CD8-positive, alpha-beta T cell (primary cell): ENCODE measurements at regions of chr19 and their contacts with region 1.

Region 1: DNA sequence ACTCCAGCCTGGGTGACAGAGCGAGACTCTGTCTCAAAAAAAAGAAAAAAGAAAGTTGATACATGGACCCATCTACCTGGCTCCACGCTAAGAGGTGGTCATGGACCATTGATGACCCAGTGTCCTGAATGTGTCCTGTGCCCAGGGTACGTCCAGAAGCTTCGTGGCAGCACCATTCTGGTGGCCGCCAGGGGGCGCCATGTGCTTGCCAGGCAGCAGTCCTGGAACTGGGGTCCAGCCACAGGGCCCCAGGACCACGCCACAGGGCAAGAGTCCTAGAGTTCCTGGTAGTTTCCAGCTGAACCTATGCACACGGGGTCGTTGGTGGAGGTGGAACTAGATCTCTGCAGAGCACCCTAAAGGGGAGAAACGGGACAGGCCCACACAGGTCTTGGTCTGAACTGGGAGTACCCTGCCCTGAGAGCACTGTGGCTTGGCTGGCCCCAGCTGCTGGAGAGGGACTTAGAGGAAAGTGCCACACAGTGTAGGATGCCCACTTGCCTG is 19.9 kb upstream of the FBXO27 start:
- DNase-seq: peak; percentile 44 to 86 (median 71)
- ATAC-seq: no peak
- H3K4me3 ChIP-seq: no peak overlapping the region
- H3K4me3 Mint-ChIP-seq: no peak overlapping the region
- H3K27ac ChIP-seq: no peak overlapping the region
- H3K27ac Mint-ChIP-seq: no peak overlapping the region
- H3K4me1 ChIP-seq: no peaks in the 10 kb centered on the region
- H3K4me1 Mint-ChIP-seq: no peaks in the 10 kb centered on the region
- H3K27me3 ChIP-seq: no peaks in the 10 kb centered on the region
- H3K27me3 Mint-ChIP-seq: peaks cover 4% of the 10 kb centered on the region
- CTCF ChIP-seq: peak; percentile 94

Region 2: GRCh38 chr19:38929929-38930775 is 122.1 kb before region 1 on chr19 and contains the start of gene SARS2:
- CTCF ChIA-PET with region 1: no interaction called
- POLR2A ChIA-PET with region 1: no interaction called
- intact Hi-C with region 1: no loop called
- DNase-seq: peak; percentile 83 to 98 (median 92)
- ATAC-seq: peak; percentile 74
- H3K4me3 ChIP-seq: peak within 1 kb of the TSS; percentile 81 to 85
- H3K4me3 Mint-ChIP-seq: peak within 1 kb of the TSS; percentile 97
- H3K27ac ChIP-seq: peak within 1 kb of the TSS; percentile 85 to 87
- H3K27ac Mint-ChIP-seq: peak within 1 kb of the TSS; percentile 100
- H3K4me1 ChIP-seq: peaks cover 22% of the 10 kb centered on the region
- H3K4me1 Mint-ChIP-seq: peaks cover 39% of the 10 kb centered on the region
- H3K27me3 ChIP-seq: no peaks in the 10 kb centered on the region
- H3K27me3 Mint-ChIP-seq: no peaks in the 10 kb centered on the region
- CTCF ChIP-seq: peak; percentile 100
- total RNA-seq, gene SARS2: 24.3 to 26.1 TPM

Region 3: DNA sequence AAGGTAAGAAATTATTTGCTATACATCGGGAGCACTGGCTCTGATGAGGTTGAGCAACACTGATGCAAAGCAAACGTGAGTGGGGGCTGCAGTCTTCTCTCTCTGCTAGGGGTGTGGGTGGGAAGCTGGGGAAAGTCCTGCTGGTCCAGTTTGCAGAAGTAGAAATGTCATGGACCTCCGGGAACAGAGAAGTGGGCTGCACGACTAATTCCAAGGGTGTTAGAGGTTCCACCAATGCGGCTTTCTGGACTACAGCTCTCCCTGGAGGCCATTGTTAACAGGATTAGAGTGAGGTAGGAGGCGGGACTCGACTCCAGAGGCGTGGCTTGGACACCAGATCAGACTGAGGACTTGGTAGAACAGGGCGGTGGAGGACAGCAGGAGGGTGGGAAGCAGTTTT is 14.2 kb before region 1 on chr19:
- CTCF ChIA-PET with region 1: interaction called, 11 read pairs
- POLR2A ChIA-PET with region 1: no interaction called
- intact Hi-C with region 1: no loop called
- DNase-seq: peak in 1 of 9 experiments; percentile 14
- ATAC-seq: no peak
- H3K4me3 ChIP-seq: no peak overlapping the region
- H3K4me3 Mint-ChIP-seq: no peak overlapping the region
- H3K27ac ChIP-seq: no peak overlapping the region
- H3K27ac Mint-ChIP-seq: no peak overlapping the region
- H3K4me1 ChIP-seq: no peaks in the 10 kb centered on the region
- H3K4me1 Mint-ChIP-seq: no peaks in the 10 kb centered on the region
- H3K27me3 ChIP-seq: no peaks in the 10 kb centered on the region
- H3K27me3 Mint-ChIP-seq: peaks cover 3% of the 10 kb centered on the region
- CTCF ChIP-seq: no peak

Region 4: DNA sequence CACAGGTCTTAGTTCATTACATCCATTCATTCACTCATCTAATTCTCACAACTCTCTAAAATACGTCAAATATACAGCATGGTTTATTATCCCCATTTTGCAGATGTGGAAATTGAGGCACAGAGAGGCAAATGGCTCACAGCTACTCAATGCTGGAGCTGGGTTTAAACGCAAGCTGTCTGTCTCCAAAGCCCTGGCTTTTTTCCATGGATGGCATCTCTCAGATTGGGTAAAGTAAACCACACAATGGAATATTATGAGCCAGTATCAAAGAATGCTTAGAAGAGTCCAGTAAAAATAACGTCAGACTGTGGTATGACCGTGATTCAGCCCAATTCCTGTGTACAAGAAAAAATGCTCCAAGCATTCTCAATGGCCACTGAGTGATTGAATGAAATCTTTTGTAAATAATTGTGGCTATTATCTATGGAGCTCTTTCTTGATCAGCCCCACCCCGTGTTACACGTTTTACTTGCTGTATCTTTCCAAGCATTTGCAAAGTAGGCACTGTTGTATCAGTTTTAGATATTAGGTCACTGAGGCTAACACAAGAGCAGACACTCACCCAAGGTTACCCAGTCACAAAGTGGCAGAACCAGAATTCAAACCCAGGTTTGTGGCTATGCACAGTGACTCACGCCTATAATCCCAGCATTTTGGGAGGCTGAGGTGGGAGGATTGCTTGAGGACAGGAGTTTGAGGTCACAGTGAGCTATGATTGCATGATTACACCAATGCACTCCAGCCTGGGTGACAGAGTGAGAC is 26.3 kb after region 1 on chr19:
- CTCF ChIA-PET with region 1: interaction called, 9 read pairs
- POLR2A ChIA-PET with region 1: interaction called, 5 read pairs
- intact Hi-C with region 1: loop called in 1 of 2 experiments (anchors 2 kb)
- DNase-seq: no peak
- ATAC-seq: no peak
- H3K4me3 ChIP-seq: no peak overlapping the region
- H3K4me3 Mint-ChIP-seq: no peak overlapping the region
- H3K27ac ChIP-seq: no peak overlapping the region
- H3K27ac Mint-ChIP-seq: no peak overlapping the region
- H3K4me1 ChIP-seq: peaks cover 17% of the 10 kb centered on the region
- H3K4me1 Mint-ChIP-seq: peaks cover 21% of the 10 kb centered on the region
- H3K27me3 ChIP-seq: peaks cover 6% of the 10 kb centered on the region in 2 experiments
- H3K27me3 Mint-ChIP-seq: peaks cover 32% of the 10 kb centered on the region
- CTCF ChIP-seq: no peak

Region 5: GRCh38 chr19:39099341-39099740 is 47.0 kb after region 1 on chr19:
- CTCF ChIA-PET with region 1: no interaction called
- POLR2A ChIA-PET with region 1: no interaction called
- intact Hi-C with region 1: no loop called
- DNase-seq: no peak
- ATAC-seq: no peak
- H3K4me3 ChIP-seq: no peak overlapping the region
- H3K4me3 Mint-ChIP-seq: no peak overlapping the region
- H3K27ac ChIP-seq: no peak overlapping the region
- H3K27ac Mint-ChIP-seq: no peak overlapping the region
- H3K4me1 ChIP-seq: no peaks in the 10 kb centered on the region
- H3K4me1 Mint-ChIP-seq: peaks cover 2% of the 10 kb centered on the region
- H3K27me3 ChIP-seq: peaks cover 0 to 4% of the 10 kb centered on the region in 2 experiments
- H3K27me3 Mint-ChIP-seq: peaks cover 33% of the 10 kb centered on the region
- CTCF ChIP-seq: no peak

Region 6: DNA sequence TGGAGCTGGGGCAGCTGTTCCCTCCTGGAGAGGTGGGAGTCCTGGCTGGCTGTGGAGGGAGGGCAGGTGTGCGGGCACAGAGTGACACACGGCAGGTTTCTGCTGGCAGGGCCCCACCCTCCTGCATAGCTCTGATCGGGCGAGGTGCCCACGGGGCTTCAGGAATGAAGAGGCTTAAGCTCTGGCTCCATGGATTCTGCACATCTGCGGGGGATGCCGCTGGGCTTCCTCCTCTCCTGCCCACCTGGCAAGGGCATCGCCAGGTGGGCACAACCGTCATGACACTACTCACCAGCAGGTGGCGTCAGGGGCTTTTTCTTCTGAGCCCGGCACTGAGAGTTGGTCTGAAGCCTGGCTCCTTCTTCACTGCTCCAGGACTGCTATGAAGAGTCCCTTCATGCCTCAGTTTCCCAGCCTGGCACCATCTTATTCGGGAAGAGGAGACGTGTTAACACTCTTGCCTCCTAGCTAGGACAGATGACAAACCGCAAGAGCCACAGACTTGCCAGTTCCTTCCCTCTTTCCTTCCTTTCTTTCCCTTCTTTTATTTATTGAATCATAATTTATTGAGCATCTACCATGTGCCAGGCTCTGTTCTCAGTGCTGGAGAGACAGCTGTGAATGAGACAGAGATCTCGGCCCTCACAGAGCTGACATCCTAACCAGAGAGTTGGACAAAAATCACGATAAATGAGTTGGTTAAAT is 58.1 kb after region 1 on chr19:
- CTCF ChIA-PET with region 1: interaction called, 9 read pairs
- POLR2A ChIA-PET with region 1: no interaction called
- intact Hi-C with region 1: loop called (anchors 1 kb)
- DNase-seq: peak; percentile 64 to 83 (median 73)
- ATAC-seq: peak; percentile 91
- H3K4me3 ChIP-seq: no peak overlapping the region
- H3K4me3 Mint-ChIP-seq: no peak overlapping the region
- H3K27ac ChIP-seq: no peak overlapping the region
- H3K27ac Mint-ChIP-seq: no peak overlapping the region
- H3K4me1 ChIP-seq: peaks cover 6% of the 10 kb centered on the region
- H3K4me1 Mint-ChIP-seq: no peaks in the 10 kb centered on the region
- H3K27me3 ChIP-seq: no peaks in the 10 kb centered on the region
- H3K27me3 Mint-ChIP-seq: no peaks in the 10 kb centered on the region
- CTCF ChIP-seq: peak; percentile 75

Region 7: GRCh38 chr19:39328046-39328705 is 275.9 kb after region 1 on chr19:
- CTCF ChIA-PET with region 1: no interaction called
- POLR2A ChIA-PET with region 1: no interaction called
- intact Hi-C with region 1: loop called in 1 of 2 experiments (anchors 2 kb)
- DNase-seq: peak; percentile 71 to 90 (median 81)
- ATAC-seq: peak; percentile 93
- H3K4me3 ChIP-seq: no peak overlapping the region
- H3K4me3 Mint-ChIP-seq: peak overlapping the region; percentile 47
- H3K27ac ChIP-seq: no peak overlapping the region
- H3K27ac Mint-ChIP-seq: peak overlapping the region; percentile 71
- H3K4me1 ChIP-seq: peaks cover 52% of the 10 kb centered on the region
- H3K4me1 Mint-ChIP-seq: peaks cover 49% of the 10 kb centered on the region
- H3K27me3 ChIP-seq: no peaks in the 10 kb centered on the region
- H3K27me3 Mint-ChIP-seq: no peaks in the 10 kb centered on the region
- CTCF ChIP-seq: peak; percentile 96